CD8-positive, alpha-beta T cell (primary cell): ENCODE measurements at regions of chr11 and their contacts with region 1.

Region 1: GRCh38 chr11:65418711-65419459 is 3.7 kb upstream of the NEAT1 start:
- DNase-seq: peak in 8 of 9 experiments; percentile 71 to 90 (median 82)
- ATAC-seq: peak; percentile 4
- H3K4me3 ChIP-seq: peak overlapping the region; percentile 76 to 95
- H3K4me3 Mint-ChIP-seq: peak overlapping the region; percentile 94
- H3K27ac ChIP-seq: peak overlapping the region; percentile 99 to 100
- H3K27ac Mint-ChIP-seq: peak overlapping the region; percentile 98
- H3K4me1 ChIP-seq: peaks cover 58% of the 10 kb centered on the region
- H3K4me1 Mint-ChIP-seq: peaks cover 55% of the 10 kb centered on the region
- H3K27me3 ChIP-seq: no peaks in the 10 kb centered on the region
- H3K27me3 Mint-ChIP-seq: no peaks in the 10 kb centered on the region
- CTCF ChIP-seq: no peak

Region 2: DNA sequence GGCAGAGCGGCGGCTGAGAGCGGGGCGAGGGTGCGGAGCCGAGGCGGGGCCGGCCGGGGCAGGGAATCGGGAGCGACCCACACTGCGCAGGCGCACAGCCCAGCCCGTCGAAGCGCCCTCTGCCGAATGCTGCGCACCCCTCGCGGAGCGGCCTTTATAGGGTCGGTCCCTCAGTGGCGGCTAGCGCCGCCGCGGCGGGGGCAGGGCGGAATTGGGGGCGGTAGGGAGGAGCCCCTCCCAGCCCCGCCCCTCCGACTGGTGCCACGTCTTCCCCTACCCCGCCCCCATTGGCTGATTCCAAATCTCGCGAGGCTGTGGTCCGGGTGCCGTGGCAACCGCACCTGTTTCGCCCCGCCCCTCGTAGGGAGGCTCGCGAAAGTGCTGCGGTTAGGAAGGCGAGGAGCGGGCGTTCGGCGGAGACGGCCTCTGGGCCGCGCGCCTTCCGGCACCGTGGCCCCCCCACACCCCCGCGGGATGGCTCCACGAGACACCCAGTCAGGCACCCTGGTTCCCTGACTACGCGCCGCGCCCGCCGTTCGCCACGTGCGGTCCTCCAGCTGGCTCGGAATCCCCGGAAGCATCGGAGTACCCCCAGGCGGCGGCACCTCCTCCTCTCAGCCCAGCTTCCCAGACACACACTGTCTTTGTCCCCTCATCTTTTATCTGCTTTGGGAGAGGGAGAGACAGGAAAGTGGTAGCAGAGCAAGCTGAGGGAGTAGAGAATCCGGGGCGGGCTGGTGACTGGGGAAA is 540.2 kb before region 1 on chr11 and contains the start of gene EHD1:
- CTCF ChIA-PET with region 1: no interaction called
- POLR2A ChIA-PET with region 1: no interaction called
- intact Hi-C with region 1: loop called in 1 of 2 experiments (anchors 5 kb)
- DNase-seq: peak; percentile 99 to 100 (median 100)
- ATAC-seq: peak; percentile 82
- H3K4me3 ChIP-seq: peak within 1 kb of the TSS; percentile 87 to 100
- H3K4me3 Mint-ChIP-seq: peak within 1 kb of the TSS; percentile 95
- H3K27ac ChIP-seq: peak within 1 kb of the TSS; percentile 91 to 96
- H3K27ac Mint-ChIP-seq: peak within 1 kb of the TSS; percentile 97
- H3K4me1 ChIP-seq: peaks cover 57% of the 10 kb centered on the region
- H3K4me1 Mint-ChIP-seq: peaks cover 63% of the 10 kb centered on the region
- H3K27me3 ChIP-seq: no peaks in the 10 kb centered on the region
- H3K27me3 Mint-ChIP-seq: no peaks in the 10 kb centered on the region
- CTCF ChIP-seq: peak; percentile 29
- total RNA-seq, gene EHD1: 187 to 212 TPM

Region 3: GRCh38 chr11:65388731-65389130 is 30.2 kb before region 1 on chr11:
- CTCF ChIA-PET with region 1: interaction called, 21 read pairs
- POLR2A ChIA-PET with region 1: interaction called, 10 read pairs
- intact Hi-C with region 1: no loop called
- DNase-seq: no peak
- ATAC-seq: no peak
- H3K4me3 ChIP-seq: no peak overlapping the region
- H3K4me3 Mint-ChIP-seq: peak overlapping the region; percentile 71
- H3K27ac ChIP-seq: no peak overlapping the region
- H3K27ac Mint-ChIP-seq: peak overlapping the region; percentile 74
- H3K4me1 ChIP-seq: peaks cover 57% of the 10 kb centered on the region
- H3K4me1 Mint-ChIP-seq: peaks cover 60% of the 10 kb centered on the region
- H3K27me3 ChIP-seq: no peaks in the 10 kb centered on the region
- H3K27me3 Mint-ChIP-seq: no peaks in the 10 kb centered on the region
- CTCF ChIP-seq: no peak

Region 4: GRCh38 chr11:65440831-65441499 is 22.1 kb after region 1 on chr11:
- CTCF ChIA-PET with region 1: interaction called, 20 read pairs
- POLR2A ChIA-PET with region 1: interaction called, 15 read pairs
- intact Hi-C with region 1: no loop called
- DNase-seq: peak in 1 of 9 experiments; percentile 30
- ATAC-seq: peak; percentile 49
- H3K4me3 ChIP-seq: no peak overlapping the region
- H3K4me3 Mint-ChIP-seq: peak overlapping the region; percentile 58
- H3K27ac ChIP-seq: peak overlapping the region in 1 of 2 experiments; percentile 35
- H3K27ac Mint-ChIP-seq: peak overlapping the region; percentile 82
- H3K4me1 ChIP-seq: peaks cover 10% of the 10 kb centered on the region
- H3K4me1 Mint-ChIP-seq: peaks cover 55% of the 10 kb centered on the region
- H3K27me3 ChIP-seq: no peaks in the 10 kb centered on the region
- H3K27me3 Mint-ChIP-seq: no peaks in the 10 kb centered on the region
- CTCF ChIP-seq: no peak

Region 5: GRCh38 chr11:65477149-65477965 is 58.5 kb after region 1 on chr11:
- CTCF ChIA-PET with region 1: interaction called, 22 read pairs
- POLR2A ChIA-PET with region 1: interaction called, 94 read pairs
- intact Hi-C with region 1: loop called in 1 of 2 experiments (anchors 2 kb)
- DNase-seq: peak; percentile 71 to 94 (median 91)
- ATAC-seq: peak; percentile 78
- H3K4me3 ChIP-seq: peak overlapping the region; percentile 89 to 92
- H3K4me3 Mint-ChIP-seq: peak overlapping the region; percentile 100
- H3K27ac ChIP-seq: peak overlapping the region; percentile 89 to 98
- H3K27ac Mint-ChIP-seq: peak overlapping the region; percentile 100
- H3K4me1 ChIP-seq: peaks cover 12% of the 10 kb centered on the region
- H3K4me1 Mint-ChIP-seq: peaks cover 21% of the 10 kb centered on the region
- H3K27me3 ChIP-seq: no peaks in the 10 kb centered on the region
- H3K27me3 Mint-ChIP-seq: no peaks in the 10 kb centered on the region
- CTCF ChIP-seq: no peak